ENCODE measurements at regions of chr9 and their contacts with region 1.

Region 1: GRCh38 chr9:131237931-131238401 is 38.3 kb downstream of the FAM78A start:
- DNase-seq: peak; percentile 94
- ATAC-seq: peak; percentile 97
- H3K4me3 Mint-ChIP-seq: peak overlapping the region; percentile 56
- H3K27ac Mint-ChIP-seq: peak overlapping the region; percentile 95
- H3K4me1 Mint-ChIP-seq: peaks cover 45% of the 10 kb centered on the region
- H3K27me3 Mint-ChIP-seq: no peaks in the 10 kb centered on the region

Region 2: DNA sequence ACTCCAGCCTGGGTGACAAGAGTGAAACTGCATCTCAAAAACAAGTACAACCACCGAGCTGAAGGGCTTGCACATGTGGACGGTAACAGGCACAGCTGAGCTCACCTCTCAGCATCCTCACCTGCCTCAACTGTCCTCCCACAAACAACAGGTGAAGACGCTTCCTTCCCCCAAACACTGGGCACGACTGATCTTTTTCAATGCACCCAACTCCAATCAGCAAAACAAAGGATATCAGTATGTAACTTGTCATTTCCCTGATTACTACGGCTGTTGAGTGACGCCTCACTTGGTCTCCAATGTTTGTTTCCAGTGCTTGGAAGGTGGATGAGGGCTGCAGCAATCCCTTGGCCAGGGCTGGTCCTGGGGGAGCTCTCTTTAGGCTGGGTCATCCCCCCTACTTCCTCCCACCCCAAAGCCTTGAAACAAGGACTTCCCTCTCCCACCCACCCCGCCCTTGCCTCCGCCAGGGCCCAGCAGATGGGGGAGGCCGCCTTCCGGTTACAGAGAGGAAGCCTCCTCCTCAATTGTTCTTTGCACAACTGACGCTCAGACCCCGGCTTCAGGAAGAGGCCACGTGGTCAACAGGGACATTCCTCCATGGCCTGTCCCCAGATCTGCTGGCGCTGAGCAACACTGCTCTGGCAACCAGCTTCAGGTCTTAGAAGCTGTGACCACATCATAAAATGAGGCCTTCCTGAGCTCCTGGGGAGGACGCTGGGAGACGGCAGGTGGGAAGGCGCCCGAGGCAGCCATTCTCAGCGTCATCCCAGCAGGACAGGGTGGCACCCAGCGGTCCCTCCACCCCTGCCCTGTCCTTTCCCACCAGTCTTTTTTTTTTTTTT is 32.4 kb after region 1 on chr9:
- CTCF ChIA-PET with region 1: interaction called, 5 read pairs
- POLR2A ChIA-PET with region 1: no interaction called
- intact Hi-C with region 1: loop called (anchors 1 to 2 kb)
- DNase-seq: peak; percentile 77
- ATAC-seq: peak; percentile 13
- H3K4me3 Mint-ChIP-seq: peak overlapping the region; percentile 90
- H3K27ac Mint-ChIP-seq: peak overlapping the region; percentile 100
- H3K4me1 Mint-ChIP-seq: peaks cover 58% of the 10 kb centered on the region
- H3K27me3 Mint-ChIP-seq: no peaks in the 10 kb centered on the region

Region 3: DNA sequence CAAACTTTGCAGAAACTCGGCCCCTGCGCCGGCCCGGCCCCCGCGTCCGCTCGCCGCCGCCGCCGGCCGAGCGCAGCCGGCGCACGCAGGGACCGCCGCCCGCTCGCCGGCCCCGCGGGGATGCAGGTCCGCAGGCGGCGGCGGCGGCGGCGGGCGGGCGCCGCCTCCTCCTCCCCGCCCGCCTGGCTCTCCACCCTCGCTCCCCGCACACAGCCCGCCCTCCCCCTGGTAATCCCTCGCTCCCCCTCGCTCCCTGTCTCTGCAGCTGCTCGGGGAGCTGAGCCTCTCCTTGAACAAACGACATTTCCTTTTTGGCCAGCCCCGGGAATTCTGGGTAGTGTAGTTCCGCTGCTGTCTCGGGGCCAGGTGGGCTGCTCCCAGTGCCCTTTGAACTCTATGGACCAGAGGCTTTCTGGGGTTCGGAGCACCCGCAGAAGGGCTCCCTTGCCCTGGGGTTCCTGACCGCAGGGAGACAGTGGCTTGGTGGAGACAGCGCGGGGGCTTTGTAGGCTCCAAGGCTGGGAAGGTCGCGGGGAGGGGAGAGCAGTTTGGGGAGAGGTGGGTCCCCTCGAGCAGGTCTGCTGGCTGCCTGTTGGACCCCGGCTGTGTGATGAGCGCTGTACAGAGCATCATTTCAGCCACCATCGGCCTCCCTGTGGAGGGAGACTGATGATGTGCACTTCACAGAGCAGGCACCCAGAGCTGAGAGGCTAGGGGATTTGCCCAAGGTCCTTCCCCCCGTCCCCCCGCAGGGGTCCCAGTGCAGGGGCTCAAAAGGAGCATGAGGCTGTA is 40.1 kb after region 1 on chr9:
- CTCF ChIA-PET with region 1: no interaction called
- POLR2A ChIA-PET with region 1: no interaction called
- intact Hi-C with region 1: loop called in 1 of 2 experiments (anchors 1 kb)
- DNase-seq: peak; percentile 88
- ATAC-seq: peak; percentile 55
- H3K4me3 Mint-ChIP-seq: peak overlapping the region; percentile 75
- H3K27ac Mint-ChIP-seq: peak overlapping the region; percentile 71
- H3K4me1 Mint-ChIP-seq: peaks cover 22% of the 10 kb centered on the region
- H3K27me3 Mint-ChIP-seq: peaks cover 7% of the 10 kb centered on the region